B cell (primary cell): ENCODE measurements at regions of chr12 and their contacts with region 1.

Region 1: GRCh38 chr12:47264951-47265350 is 185.2 kb upstream of the AMIGO2 start:
- DNase-seq: no peak
- ATAC-seq: no peak
- H3K4me3 ChIP-seq: no peak overlapping the region
- H3K4me3 Mint-ChIP-seq: no peak overlapping the region
- H3K27ac ChIP-seq: no peak overlapping the region
- H3K27ac Mint-ChIP-seq: peak overlapping the region; percentile 42
- H3K4me1 ChIP-seq: peaks cover 24 to 28% of the 10 kb centered on the region in 2 donors
- H3K4me1 Mint-ChIP-seq: peaks cover 43% of the 10 kb centered on the region
- H3K27me3 ChIP-seq: no peaks in the 10 kb centered on the region
- H3K27me3 Mint-ChIP-seq: no peaks in the 10 kb centered on the region
- CTCF ChIP-seq: no peak

Region 2: DNA sequence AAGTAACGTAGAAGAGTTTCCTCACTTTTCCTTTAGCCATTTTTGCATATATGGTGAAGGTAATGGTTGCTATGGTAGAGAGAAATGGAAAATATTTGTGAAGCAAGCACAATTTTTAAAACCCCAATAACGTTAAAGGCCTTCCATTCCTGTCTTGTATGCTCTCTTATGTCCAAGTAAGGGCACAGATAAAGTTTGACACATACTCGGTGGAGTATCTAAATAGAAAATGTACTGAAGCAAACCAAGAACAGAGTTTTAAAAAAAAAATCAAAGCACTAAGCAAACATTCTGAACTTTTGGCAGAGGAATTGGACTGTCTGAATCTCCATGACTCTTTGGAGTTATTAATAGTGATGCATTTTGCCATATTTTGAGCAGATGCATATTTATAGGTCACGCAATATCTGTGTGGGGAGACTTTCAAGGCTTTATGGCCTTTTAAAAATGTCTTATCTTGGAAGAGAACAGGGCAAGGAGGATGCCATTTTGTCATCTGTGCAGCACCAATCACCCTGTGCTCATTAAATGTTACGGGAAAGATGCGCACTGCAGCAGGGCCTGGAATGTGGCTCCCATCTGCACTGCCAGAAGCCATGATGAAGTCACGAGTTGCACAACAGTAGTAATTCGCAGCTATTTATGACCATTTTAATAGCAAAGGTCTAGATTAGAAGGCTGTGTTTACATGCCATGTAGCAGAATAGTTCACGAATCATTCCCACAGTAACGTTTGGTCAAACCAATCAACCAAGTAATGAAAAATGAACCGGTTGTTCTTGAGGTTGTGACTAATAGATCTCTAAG is 161.9 kb before region 1 on chr12:
- CTCF ChIA-PET with region 1: no interaction called
- POLR2A ChIA-PET with region 1: no interaction called
- intact Hi-C with region 1: no loop called
- DNase-seq: no peak
- ATAC-seq: no peak
- H3K4me3 ChIP-seq: no peak overlapping the region
- H3K4me3 Mint-ChIP-seq: no peak overlapping the region
- H3K27ac ChIP-seq: no peak overlapping the region
- H3K27ac Mint-ChIP-seq: no peak overlapping the region
- H3K4me1 ChIP-seq: no peaks in the 10 kb centered on the region
- H3K4me1 Mint-ChIP-seq: no peaks in the 10 kb centered on the region
- H3K27me3 ChIP-seq: no peaks in the 10 kb centered on the region
- H3K27me3 Mint-ChIP-seq: no peaks in the 10 kb centered on the region
- CTCF ChIP-seq: no peak

Region 3: GRCh38 chr12:47296828-47297227 is 31.9 kb after region 1 on chr12:
- CTCF ChIA-PET with region 1: no interaction called
- POLR2A ChIA-PET with region 1: interaction called, 6 read pairs
- intact Hi-C with region 1: loop called (anchors 5 kb)
- DNase-seq: no peak
- ATAC-seq: no peak
- H3K4me3 ChIP-seq: no peak overlapping the region
- H3K4me3 Mint-ChIP-seq: no peak overlapping the region
- H3K27ac ChIP-seq: no peak overlapping the region
- H3K27ac Mint-ChIP-seq: no peak overlapping the region
- H3K4me1 ChIP-seq: peaks cover 0 to 4% of the 10 kb centered on the region in 2 donors
- H3K4me1 Mint-ChIP-seq: peaks cover 24% of the 10 kb centered on the region
- H3K27me3 ChIP-seq: no peaks in the 10 kb centered on the region
- H3K27me3 Mint-ChIP-seq: no peaks in the 10 kb centered on the region
- CTCF ChIP-seq: no peak